ENCODE measurements at regions of chrX and their contacts with region 1.

Region 1: GRCh38 chrX:30931925-30932324 is 42.9 kb upstream of the TAB3 start:
- DNase-seq: no peak

Region 2: GRCh38 chrX:30910124-30910860 is 21.6 kb before region 1 on chrX:
- intact Hi-C with region 1: loop called in 1 of 2 experiments (anchors 2 kb)
- DNase-seq: no peak

Region 3: GRCh38 chrX:31658360-31658759 is 726.4 kb after region 1 on chrX:
- intact Hi-C with region 1: no loop called
- DNase-seq: no peak